Cardiac septum (tissue), 1 donor: ENCODE measurements at regions of chr21 and their contacts with region 1.

Region 1: DNA sequence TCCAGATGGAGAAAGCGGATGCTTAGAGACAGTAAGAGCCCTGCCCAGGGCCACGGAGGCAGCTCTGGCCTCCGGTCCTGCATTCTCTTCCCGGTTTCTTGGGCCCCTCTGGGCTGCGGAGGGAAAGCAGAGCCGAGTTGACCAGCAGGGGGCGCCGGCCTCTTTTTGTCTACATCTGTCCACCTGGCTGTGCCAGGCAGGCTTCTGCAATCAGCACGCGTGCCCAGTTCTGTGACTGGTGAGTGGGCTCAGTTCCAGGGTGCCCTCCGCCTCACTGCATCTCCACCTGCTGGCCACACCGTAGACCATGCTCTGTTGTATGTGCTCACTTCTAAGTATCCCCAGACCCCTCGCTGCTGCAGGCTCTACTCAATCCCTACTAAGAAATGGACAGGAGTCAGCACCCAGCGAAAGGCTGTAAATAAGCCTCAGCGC is 6.7 kb upstream of the HUNK start:
- DNase-seq: peak; percentile 90

Region 2: DNA sequence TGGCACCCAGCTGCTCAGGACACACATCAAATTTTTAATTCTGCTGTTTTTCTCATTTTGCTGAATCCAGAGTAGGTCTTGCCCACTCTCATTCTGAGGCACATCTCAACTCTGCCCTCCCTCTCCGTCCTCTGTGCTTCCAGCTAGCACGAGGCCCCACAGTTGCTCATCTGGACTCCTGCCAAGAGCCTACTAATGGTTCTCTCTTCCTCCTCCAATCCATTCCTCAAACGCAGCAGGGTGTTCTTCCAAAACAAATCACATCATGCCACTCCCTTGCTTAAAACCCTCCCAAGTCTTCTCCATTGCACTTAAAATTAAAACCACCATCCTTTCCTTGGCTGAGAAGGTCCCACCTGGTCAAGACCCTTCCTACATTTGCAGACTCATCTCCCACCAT is 84.4 kb before region 1 on chr21:
- intact Hi-C with region 1: loop called (anchors 10 kb)
- DNase-seq: no peak

Region 3: GRCh38 chr21:32135401-32136363 is 269.6 kb after region 1 on chr21:
- intact Hi-C with region 1: loop called (anchors 10 kb)
- DNase-seq: no peak